ENCODE measurements at regions of chr7 and their contacts with region 1.

Region 1: GRCh38 chr7:50206453-50207250 is 97.9 kb upstream of the IKZF1 start:
- DNase-seq: peak; percentile 87
- ATAC-seq: peak; percentile 81
- H3K4me3 Mint-ChIP-seq: peak overlapping the region; percentile 63
- H3K27ac Mint-ChIP-seq: peak overlapping the region; percentile 93
- H3K4me1 Mint-ChIP-seq: peaks cover 97% of the 10 kb centered on the region
- H3K27me3 Mint-ChIP-seq: no peaks in the 10 kb centered on the region

Region 2: GRCh38 chr7:50119815-50120637 is 86.6 kb before region 1 on chr7:
- CTCF ChIA-PET with region 1: no interaction called
- POLR2A ChIA-PET with region 1: no interaction called
- DNase-seq: peak; percentile 58
- ATAC-seq: peak; percentile 73
- H3K4me3 Mint-ChIP-seq: no peak overlapping the region
- H3K27ac Mint-ChIP-seq: no peak overlapping the region
- H3K4me1 Mint-ChIP-seq: no peaks in the 10 kb centered on the region
- H3K27me3 Mint-ChIP-seq: peaks cover 16% of the 10 kb centered on the region

Region 3: DNA sequence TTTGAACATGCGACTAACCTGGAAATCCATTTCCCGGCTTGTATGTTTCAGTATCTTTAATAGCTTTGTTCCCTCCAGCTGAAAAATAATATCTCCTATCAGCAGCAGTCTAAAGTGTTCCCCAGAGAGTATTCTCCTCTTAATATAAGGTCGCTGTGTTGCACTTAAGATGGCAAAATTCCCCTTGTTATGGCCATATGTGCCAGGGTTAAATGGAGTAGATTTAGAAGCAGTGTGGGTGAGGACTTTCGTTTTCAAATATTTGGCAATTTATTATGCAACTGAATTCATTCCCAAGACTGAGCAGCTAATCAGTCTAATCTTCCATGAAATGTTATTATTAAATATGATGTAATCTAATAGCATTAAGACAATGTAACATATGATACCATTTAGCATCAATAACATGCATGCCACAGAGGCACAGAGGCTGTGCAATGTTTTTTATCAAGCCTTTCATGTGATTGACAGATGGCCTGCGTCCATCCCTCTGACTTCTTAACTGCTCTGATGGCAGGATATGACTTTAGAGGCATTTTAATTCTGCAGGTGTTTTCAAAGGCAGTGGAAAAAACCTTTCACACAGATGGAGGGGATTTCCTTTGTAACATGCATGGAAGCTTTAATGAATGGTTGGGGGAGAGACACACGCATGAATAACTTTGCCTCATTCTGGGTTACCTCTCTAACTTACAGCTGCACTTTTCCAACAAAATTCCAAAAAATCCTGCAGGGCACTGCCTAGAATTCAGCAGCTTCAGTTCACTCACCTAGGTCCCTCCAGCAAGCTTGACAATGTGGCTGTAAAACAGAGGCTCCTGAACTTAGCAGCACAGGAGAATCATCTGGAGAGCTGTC is 58.5 kb before region 1 on chr7:
- CTCF ChIA-PET with region 1: interaction called, 22 read pairs
- POLR2A ChIA-PET with region 1: interaction called, 17 read pairs
- DNase-seq: peak; percentile 52
- ATAC-seq: peak; percentile 57
- H3K4me3 Mint-ChIP-seq: no peak overlapping the region
- H3K27ac Mint-ChIP-seq: peak overlapping the region; percentile 75
- H3K4me1 Mint-ChIP-seq: peaks cover 76% of the 10 kb centered on the region
- H3K27me3 Mint-ChIP-seq: no peaks in the 10 kb centered on the region

Region 4: GRCh38 chr7:50229964-50230363 is 23.3 kb after region 1 on chr7:
- CTCF ChIA-PET with region 1: interaction called, 32 read pairs
- POLR2A ChIA-PET with region 1: interaction called, 13 read pairs
- DNase-seq: no peak
- ATAC-seq: no peak
- H3K4me3 Mint-ChIP-seq: no peak overlapping the region
- H3K27ac Mint-ChIP-seq: no peak overlapping the region
- H3K4me1 Mint-ChIP-seq: peaks cover 51% of the 10 kb centered on the region
- H3K27me3 Mint-ChIP-seq: no peaks in the 10 kb centered on the region

Region 5: DNA sequence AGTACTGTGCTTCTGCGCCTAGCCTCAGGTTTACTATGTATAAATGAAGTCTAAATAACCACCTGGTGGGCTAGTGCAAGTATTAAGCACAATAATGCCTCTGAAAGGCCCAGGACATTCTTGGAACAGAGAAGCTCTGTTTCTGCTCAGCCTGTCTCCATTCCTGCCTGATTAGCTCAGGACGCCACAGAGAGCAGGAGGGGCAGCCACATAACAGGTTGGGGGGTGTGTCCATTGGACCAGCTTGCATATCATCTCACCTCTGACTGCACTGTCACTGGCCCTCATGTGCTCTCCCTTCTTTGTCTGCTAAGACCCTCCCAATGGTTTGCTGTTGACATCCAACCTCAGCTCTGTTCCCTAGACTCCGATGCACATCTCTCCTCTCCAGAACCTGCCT is 45.1 kb after region 1 on chr7:
- CTCF ChIA-PET with region 1: no interaction called
- POLR2A ChIA-PET with region 1: no interaction called
- DNase-seq: no peak
- ATAC-seq: no peak
- H3K4me3 Mint-ChIP-seq: no peak overlapping the region
- H3K27ac Mint-ChIP-seq: no peak overlapping the region
- H3K4me1 Mint-ChIP-seq: no peaks in the 10 kb centered on the region
- H3K27me3 Mint-ChIP-seq: no peaks in the 10 kb centered on the region

Region 6: GRCh38 chr7:50281680-50282445 is 75.2 kb after region 1 on chr7:
- CTCF ChIA-PET with region 1: interaction called, 13 read pairs
- POLR2A ChIA-PET with region 1: no interaction called
- DNase-seq: peak; percentile 51
- ATAC-seq: peak; percentile 75
- H3K4me3 Mint-ChIP-seq: peak overlapping the region; percentile 56
- H3K27ac Mint-ChIP-seq: peak overlapping the region; percentile 87
- H3K4me1 Mint-ChIP-seq: peaks cover 66% of the 10 kb centered on the region
- H3K27me3 Mint-ChIP-seq: no peaks in the 10 kb centered on the region

Region 7: DNA sequence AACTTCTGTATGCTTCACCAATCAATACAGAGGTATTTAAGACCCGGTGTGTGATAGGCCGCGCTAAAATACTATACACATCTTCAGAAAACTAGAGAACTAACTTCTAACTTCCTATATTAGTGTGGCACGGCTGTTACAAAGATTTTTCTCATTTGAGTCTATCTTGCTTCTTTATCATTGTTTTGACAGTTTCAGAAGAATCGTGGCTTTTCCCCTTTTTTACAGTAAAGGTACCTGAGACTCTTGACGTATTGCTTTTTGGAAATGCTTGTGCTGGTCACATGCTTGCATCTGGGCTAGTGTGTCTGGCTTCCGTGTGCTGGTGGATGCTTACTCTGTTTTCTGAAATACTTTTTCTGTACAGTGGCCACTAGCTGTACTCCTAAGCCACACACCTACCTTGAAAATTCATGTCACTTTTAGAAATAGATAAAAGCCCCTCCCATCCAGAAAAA is 110.6 kb after region 1 on chr7:
- CTCF ChIA-PET with region 1: interaction called, 197 read pairs
- POLR2A ChIA-PET with region 1: interaction called, 127 read pairs
- DNase-seq: peak; percentile 71
- ATAC-seq: peak; percentile 71
- H3K4me3 Mint-ChIP-seq: peak overlapping the region; percentile 76
- H3K27ac Mint-ChIP-seq: peak overlapping the region; percentile 93
- H3K4me1 Mint-ChIP-seq: peaks cover 94% of the 10 kb centered on the region
- H3K27me3 Mint-ChIP-seq: no peaks in the 10 kb centered on the region

Region 8: GRCh38 chr7:50359995-50360925 is 153.6 kb after region 1 on chr7:
- CTCF ChIA-PET with region 1: interaction called, 56 read pairs
- POLR2A ChIA-PET with region 1: interaction called, 7 read pairs
- DNase-seq: peak; percentile 89
- ATAC-seq: peak; percentile 87
- H3K4me3 Mint-ChIP-seq: peak overlapping the region; percentile 68
- H3K27ac Mint-ChIP-seq: peak overlapping the region; percentile 96
- H3K4me1 Mint-ChIP-seq: peaks cover 96% of the 10 kb centered on the region
- H3K27me3 Mint-ChIP-seq: no peaks in the 10 kb centered on the region

Region 9: DNA sequence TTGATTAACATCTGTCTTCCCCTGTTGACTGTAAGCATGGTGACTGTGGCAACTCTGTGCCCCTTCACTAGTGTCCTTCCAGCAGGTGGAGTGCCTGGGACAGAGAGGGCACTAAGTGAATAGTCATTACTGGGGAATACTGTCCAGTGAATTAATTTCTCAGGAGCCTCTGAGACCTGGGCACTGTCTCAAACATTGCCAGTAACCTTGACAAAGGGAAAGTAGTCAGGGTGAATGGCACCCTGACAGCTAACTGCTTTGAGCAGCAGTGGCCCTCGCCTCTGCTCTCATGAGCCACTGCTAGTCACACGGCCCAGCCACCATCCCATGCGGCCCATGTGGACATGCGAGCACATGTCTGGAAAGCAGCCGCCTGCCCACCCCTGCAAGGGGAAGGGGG is 589.2 kb after region 1 on chr7:
- CTCF ChIA-PET with region 1: no interaction called
- POLR2A ChIA-PET with region 1: no interaction called
- DNase-seq: no peak
- ATAC-seq: no peak
- H3K4me3 Mint-ChIP-seq: no peak overlapping the region
- H3K27ac Mint-ChIP-seq: no peak overlapping the region
- H3K4me1 Mint-ChIP-seq: peaks cover 4% of the 10 kb centered on the region
- H3K27me3 Mint-ChIP-seq: peaks cover 53% of the 10 kb centered on the region